Activated CD4-positive, alpha-beta memory T cell treated with anti-CD3 and anti-CD28 coated beads, Interleukin-2, amount 10 ng/mL, durations not matched to agents 7 days and 5 days (primary cell): ENCODE measurements at regions of chr5 and their contacts with region 1.

Region 1: GRCh38 chr5:112160652-112161391 is 258.3 kb downstream of the EPB41L4A start:
- DNase-seq: peak; percentile 93
- H3K4me3 Mint-ChIP-seq: peak overlapping the region; percentile 94
- H3K27ac Mint-ChIP-seq: peak overlapping the region; percentile 61
- H3K4me1 Mint-ChIP-seq: peaks cover 32% of the 10 kb centered on the region
- H3K27me3 Mint-ChIP-seq: peaks cover 15% of the 10 kb centered on the region

Region 2: GRCh38 chr5:111757355-111758283 is 403.2 kb before region 1 on chr5:
- CTCF ChIA-PET with region 1: no interaction called
- POLR2A ChIA-PET with region 1: interaction called, 13 read pairs
- DNase-seq: peak; percentile 83
- H3K4me3 Mint-ChIP-seq: peak overlapping the region; percentile 80
- H3K27ac Mint-ChIP-seq: peak overlapping the region; percentile 62
- H3K4me1 Mint-ChIP-seq: peaks cover 13% of the 10 kb centered on the region
- H3K27me3 Mint-ChIP-seq: peaks cover 25% of the 10 kb centered on the region

Region 3: GRCh38 chr5:112174959-112175594 is 14.3 kb after region 1 on chr5:
- CTCF ChIA-PET with region 1: interaction called, 42 read pairs
- POLR2A ChIA-PET with region 1: interaction called, 9 read pairs
- DNase-seq: peak; percentile 33
- H3K4me3 Mint-ChIP-seq: no peak overlapping the region
- H3K27ac Mint-ChIP-seq: no peak overlapping the region
- H3K4me1 Mint-ChIP-seq: peaks cover 4% of the 10 kb centered on the region
- H3K27me3 Mint-ChIP-seq: peaks cover 11% of the 10 kb centered on the region

Region 4: GRCh38 chr5:112234000-112234399 is 73.2 kb after region 1 on chr5:
- CTCF ChIA-PET with region 1: no interaction called
- POLR2A ChIA-PET with region 1: no interaction called
- DNase-seq: no peak
- H3K4me3 Mint-ChIP-seq: no peak overlapping the region
- H3K27ac Mint-ChIP-seq: no peak overlapping the region
- H3K4me1 Mint-ChIP-seq: no peaks in the 10 kb centered on the region
- H3K27me3 Mint-ChIP-seq: peaks cover 2% of the 10 kb centered on the region

Region 5: DNA sequence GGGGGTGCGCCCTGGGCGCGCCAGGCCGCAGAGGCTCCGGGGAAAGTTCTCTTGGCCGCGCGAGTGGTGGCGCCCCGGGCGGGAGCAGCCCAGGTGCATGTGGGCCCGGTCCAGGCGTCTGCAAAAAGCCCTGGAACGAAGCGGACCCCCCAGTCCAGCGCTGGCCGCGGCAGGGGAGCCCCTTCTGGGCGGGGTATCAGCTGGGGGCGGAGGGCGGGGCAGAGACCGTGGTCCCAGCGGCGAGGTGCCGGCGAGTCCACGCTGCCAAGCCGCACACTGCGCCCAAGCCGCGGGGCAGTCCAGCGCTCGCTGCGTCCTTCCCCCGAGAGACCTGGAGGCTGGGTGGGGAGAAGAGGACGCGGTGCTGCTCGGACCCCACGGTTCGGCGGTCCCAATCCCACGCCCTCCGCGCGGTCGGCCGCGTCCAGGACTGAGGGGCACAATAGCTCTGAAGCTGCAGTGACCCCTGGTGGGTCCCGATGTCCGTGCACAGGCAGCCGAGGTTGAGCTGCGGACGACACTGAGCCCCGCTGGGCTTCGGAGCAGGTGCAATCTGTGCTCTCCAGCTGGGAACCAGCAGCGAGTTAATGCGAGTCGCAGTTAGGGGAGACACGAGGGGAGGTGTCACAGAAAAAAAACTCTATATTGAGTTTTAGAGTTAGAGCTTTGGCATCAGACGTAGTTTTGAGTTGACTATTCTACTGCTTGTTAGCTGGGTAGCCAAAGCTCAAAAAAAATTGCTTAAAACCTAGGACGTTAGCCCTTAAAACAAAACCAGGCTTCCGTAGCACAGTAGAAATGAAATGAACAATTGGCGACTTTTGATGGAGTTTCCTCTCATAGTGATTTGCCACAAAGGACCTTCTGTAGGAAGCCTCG is 259.4 kb after region 1 on chr5:
- CTCF ChIA-PET with region 1: interaction called, 13 read pairs
- POLR2A ChIA-PET with region 1: interaction called, 13 read pairs
- DNase-seq: peak; percentile 56
- H3K4me3 Mint-ChIP-seq: peak overlapping the region; percentile 72
- H3K27ac Mint-ChIP-seq: no peak overlapping the region
- H3K4me1 Mint-ChIP-seq: peaks cover 11% of the 10 kb centered on the region
- H3K27me3 Mint-ChIP-seq: peaks cover 54% of the 10 kb centered on the region